ENCODE measurements at regions of chr10 and their contacts with region 1.

Region 1: DNA sequence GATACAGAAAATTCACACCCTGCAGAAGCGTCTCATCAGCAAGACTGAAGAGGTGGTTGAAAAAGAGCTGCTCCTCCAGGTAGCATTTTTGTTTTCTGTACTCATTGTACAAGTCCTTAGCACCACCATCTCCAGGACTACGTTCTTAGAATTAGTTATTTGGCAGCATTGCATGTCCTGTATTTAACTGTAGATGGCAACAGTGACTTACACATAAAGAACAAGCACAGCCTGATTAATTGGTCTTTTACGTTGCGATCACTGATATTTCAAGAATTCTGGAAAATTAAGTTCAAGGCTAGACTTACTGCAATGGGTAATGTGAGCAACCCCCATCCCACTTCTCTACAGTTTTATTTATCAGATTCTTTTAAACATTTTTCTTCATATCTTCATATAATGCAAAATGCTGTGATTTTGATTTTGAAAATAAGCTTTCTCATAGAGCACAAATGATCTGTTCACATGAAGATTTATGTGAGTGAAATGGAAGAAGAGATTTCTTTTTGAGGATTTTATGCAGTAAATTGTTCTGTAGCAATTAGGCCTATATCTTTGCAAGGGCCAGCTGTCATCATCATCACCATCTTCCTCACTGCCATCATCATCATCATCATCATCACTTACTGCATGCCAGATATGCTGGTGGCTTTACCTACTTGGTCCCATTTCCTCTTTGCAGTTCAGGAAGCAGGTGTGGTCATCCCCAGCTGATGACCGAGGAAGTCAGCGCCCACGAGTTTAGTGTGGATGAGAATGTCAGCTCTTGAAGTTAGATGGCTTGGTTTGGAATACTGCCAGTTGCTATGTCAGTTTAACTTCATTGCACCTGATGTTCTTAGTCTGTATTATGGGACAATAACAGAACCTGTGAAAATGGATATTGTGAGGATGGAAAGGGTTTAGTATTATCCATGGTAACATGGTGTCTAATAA is 53.4 kb downstream of the CFAP58 start:
- DNase-seq: no peak
- ATAC-seq: no peak

Region 2: GRCh38 chr10:104300736-104301292 is 106.2 kb before region 1 on chr10:
- intact Hi-C with region 1: no loop called
- DNase-seq: peak; percentile 78
- ATAC-seq: peak; percentile 80

Region 3: GRCh38 chr10:104622598-104623209 is 215.7 kb after region 1 on chr10:
- intact Hi-C with region 1: loop called (anchors 2 kb)
- DNase-seq: no peak
- ATAC-seq: no peak

Measured in Right ventricle myocardium inferior (tissue), 1 donor.